ENCODE measurements at regions of chr1 and their contacts with region 1.

Region 1: GRCh38 chr1:46223472-46223943 is 20.4 kb downstream of the LURAP1 start:
- DNase-seq: peak; percentile 71

Region 2: DNA sequence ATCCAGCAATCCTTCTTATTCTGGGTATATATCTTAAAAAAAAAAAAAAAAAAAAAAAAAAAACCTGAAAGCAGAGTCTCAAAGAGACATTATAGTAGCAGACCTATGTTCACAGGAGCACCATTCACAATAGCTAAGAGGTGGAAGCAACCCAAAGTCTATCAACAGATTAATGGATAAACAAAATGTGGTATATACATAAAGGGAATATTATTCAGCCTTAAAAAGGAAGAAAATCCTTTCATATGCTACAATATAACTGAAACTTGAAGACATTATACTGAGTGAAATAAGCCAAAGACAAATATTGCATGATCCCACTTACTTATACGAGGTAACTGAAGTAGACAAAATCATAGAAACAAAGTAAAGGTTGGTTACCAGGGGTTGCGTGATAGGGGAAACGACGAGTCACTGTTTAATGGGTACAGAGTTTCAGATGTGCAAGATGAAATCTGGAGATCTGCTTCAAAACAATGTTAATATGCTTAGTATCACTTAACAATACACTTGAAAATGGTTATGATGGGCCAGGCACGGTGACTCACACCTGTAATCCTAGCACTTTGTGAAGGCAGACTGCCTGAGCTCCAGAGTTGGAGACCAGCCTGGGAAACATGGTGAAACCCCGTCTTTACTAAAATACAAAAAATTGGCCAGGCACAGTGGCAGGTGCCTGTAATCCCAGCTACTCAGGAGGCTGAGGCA is 120.6 kb before region 1 on chr1:
- CTCF ChIA-PET with region 1: no interaction called
- POLR2A ChIA-PET with region 1: no interaction called
- DNase-seq: no peak

Region 3: DNA sequence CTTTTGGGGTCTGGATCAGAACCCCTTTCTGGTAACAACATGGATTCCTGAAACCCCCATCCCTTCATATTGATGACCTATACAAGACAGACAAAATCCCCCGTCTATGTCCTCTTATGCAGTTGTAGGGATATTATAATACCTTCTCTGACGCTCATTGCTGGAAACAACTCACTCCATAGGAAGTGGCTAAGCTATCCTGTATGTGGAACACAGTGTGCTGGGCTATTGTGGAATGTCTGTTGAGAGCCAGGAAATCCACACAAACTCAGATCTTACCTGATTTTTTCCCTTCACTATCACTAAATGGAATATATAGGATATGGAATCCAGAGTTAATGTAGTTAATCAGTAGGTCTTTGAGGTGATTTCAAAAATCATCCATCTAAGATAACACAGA is 73.4 kb before region 1 on chr1:
- CTCF ChIA-PET with region 1: no interaction called
- POLR2A ChIA-PET with region 1: no interaction called
- DNase-seq: no peak

Region 4: GRCh38 chr1:46183088-46183842 is 40.2 kb before region 1 on chr1:
- CTCF ChIA-PET with region 1: interaction called, 36 read pairs
- POLR2A ChIA-PET with region 1: interaction called, 3 read pairs
- DNase-seq: no peak

Region 5: DNA sequence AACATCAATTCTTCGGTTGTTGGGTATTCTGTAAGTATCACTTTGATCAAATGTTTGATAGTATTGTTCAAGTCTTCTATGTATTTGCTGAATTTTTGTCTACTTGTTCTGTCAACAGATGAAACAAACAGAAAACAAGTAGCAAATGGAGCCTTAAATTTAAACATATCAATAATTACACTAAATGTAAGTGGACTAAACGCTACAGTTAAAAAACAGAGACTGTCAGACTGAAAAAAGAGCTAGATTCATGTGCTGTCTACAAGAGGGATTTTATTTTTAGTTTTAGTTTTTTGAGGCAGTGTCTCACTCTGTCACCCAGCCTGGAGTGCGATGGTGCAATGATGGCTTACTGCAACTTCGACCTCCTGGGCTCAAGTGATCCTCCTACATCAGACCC is 13.4 kb after region 1 on chr1:
- CTCF ChIA-PET with region 1: interaction called, 29 read pairs
- POLR2A ChIA-PET with region 1: no interaction called
- DNase-seq: no peak

Measured in HEK293T (cell line).